ENCODE measurements at regions of chr16 and their contacts with region 1.

Region 1: GRCh38 chr16:84970447-84971127 is 40.7 kb downstream of the ZDHHC7 start:
- DNase-seq: peak; percentile 83 to 94
- ATAC-seq: peak; percentile 85
- H3K4me3 ChIP-seq: no peak overlapping the region
- H3K27ac ChIP-seq: no peak overlapping the region
- H3K4me1 ChIP-seq: no peaks in the 10 kb centered on the region
- H3K27me3 ChIP-seq: no peaks in the 10 kb centered on the region

Region 2: DNA sequence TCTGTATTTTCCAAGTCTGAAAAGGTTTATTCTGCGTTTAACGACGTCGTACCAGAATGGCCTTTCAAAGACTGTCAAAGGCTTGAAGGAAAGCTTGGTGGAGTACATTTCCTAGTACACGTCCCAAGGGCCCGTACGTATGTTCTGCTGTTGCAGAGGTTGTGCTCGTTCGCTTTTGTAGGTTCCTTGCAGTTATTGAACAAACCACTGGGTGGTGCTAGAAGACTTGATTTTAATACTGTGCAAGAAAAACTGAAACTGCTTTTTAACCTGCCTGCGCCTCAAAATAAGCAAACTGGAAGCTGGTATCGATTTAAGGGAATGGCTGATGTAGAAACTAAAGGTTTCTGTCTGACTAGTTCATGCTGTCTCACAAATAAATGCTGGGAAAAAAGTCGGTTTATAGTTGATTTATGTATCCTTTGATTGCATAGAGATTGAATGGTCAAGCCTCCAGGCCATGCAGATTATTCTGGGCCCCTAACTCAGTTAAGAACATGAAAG is 216.2 kb before region 1 on chr16:
- intact Hi-C with region 1: loop called (anchors 2 to 5 kb)
- DNase-seq: no peak
- ATAC-seq: peak; percentile 89
- H3K4me3 ChIP-seq: no peak overlapping the region
- H3K27ac ChIP-seq: no peak overlapping the region
- H3K4me1 ChIP-seq: no peaks in the 10 kb centered on the region
- H3K27me3 ChIP-seq: no peaks in the 10 kb centered on the region

Region 3: GRCh38 chr16:84925092-84925772 is 45.4 kb before region 1 on chr16:
- intact Hi-C with region 1: loop called in 1 of 2 experiments (anchors 1 kb)
- DNase-seq: peak; percentile 75 to 91
- ATAC-seq: no peak
- H3K4me3 ChIP-seq: no peak overlapping the region
- H3K27ac ChIP-seq: no peak overlapping the region
- H3K4me1 ChIP-seq: no peaks in the 10 kb centered on the region
- H3K27me3 ChIP-seq: no peaks in the 10 kb centered on the region

Region 4: DNA sequence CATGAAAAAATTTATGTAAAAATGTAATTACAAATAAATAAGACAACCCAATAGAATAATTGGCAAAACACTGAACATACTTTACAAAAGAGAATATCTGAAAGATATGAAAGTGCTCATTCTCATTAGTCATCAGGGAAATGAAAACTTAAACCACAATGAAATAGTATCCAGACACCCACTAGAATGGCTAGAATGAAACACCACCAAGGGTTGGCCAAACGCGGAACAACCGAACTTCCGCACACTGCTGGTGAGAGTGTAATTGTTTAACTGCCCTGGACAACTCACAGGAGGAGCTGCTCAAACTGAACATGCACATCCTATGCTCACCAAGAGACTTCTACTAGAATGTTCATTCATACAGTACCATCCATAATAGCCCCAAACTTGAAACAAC is 46.6 kb after region 1 on chr16:
- intact Hi-C with region 1: no loop called
- DNase-seq: peak in 1 of 2 donors; percentile 66
- ATAC-seq: no peak
- H3K4me3 ChIP-seq: no peak overlapping the region
- H3K27ac ChIP-seq: no peak overlapping the region
- H3K4me1 ChIP-seq: peaks cover 0 to 2% of the 10 kb centered on the region in 2 donors
- H3K27me3 ChIP-seq: no peaks in the 10 kb centered on the region